ENCODE measurements at regions of chr10 and their contacts with region 1.

Region 1: DNA sequence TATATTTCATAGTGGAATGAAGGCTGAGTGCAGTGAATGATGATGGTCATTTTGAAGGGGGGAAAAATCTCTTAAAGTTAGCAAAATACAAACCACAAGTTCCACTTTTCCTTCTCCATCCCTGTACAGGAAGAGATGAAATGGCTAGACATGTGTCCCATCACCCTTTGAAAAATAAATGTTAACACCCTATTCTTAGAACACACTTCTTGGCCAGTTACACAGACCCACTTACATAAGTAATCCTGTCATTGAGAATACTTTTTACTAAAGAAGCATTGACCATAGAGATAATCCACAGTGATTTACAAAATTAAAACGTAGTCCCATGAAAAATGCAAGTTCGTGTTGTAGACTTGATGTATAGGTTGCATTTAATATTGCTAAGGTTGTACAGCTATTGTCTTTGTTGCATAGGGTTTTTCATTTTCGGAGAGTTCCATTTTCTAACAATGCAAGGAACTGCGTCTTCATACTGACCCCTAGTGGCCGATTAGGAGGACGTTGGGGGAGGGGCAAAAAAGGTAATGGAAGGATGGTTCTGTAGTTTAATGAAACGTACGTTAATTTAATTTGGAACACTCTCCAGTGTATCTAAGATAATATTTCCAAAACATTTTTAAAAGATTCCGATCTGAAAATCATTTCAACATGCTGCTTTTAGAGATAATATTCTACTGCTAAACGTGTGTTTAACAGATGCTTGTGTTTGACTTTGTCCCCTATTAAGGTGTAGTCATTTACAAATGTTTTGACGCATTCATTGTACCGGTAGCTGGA is 60.9 kb downstream of the ARMC3 start:
- DNase-seq: peak; percentile 47
- ATAC-seq: peak; percentile 79
- H3K4me3 ChIP-seq: no peak overlapping the region
- H3K27ac ChIP-seq: no peak overlapping the region
- H3K4me1 ChIP-seq: no peaks in the 10 kb centered on the region
- H3K27me3 ChIP-seq: peaks cover 22% of the 10 kb centered on the region
- CTCF ChIP-seq: peak; percentile 98
- POLR2A ChIP-seq: no peak
- RAD21 ChIP-seq: peak; percentile 98

Region 2: GRCh38 chr10:22003079-22003913 is 985.5 kb before region 1 on chr10 and contains the start of gene DNAJC1:
- CTCF ChIA-PET with region 1: interaction called, 10 read pairs
- POLR2A ChIA-PET with region 1: no interaction called
- dilution Hi-C with region 1: no loop called
- in situ Hi-C with region 1: loop called (anchors 5 kb)
- intact Hi-C with region 1: no loop called
- DNase-seq: peak; percentile 90
- ATAC-seq: peak; percentile 99
- H3K4me3 ChIP-seq: peak within 1 kb of the TSS; percentile 69
- H3K27ac ChIP-seq: peak within 1 kb of the TSS; percentile 29
- H3K4me1 ChIP-seq: no peaks in the 10 kb centered on the region; the same call in 1 of the 2 replicates
- H3K27me3 ChIP-seq: no peaks in the 10 kb centered on the region; the same call in none of the 2 replicates
- CTCF ChIP-seq: no peak; the same call in 1 of the 2 replicates
- POLR2A ChIP-seq: peak; percentile 62
- RAD21 ChIP-seq: no peak
- total RNA-seq, gene DNAJC1: 13.3 and 22.8 TPM in 2 replicates

Region 3: GRCh38 chr10:22228943-22229801 is 759.6 kb before region 1 on chr10:
- CTCF ChIA-PET with region 1: no interaction called
- POLR2A ChIA-PET with region 1: no interaction called
- dilution Hi-C with region 1: no loop called
- in situ Hi-C with region 1: no loop called
- intact Hi-C with region 1: loop called (anchors 5 kb)
- DNase-seq: peak; percentile 91
- ATAC-seq: peak; percentile 95
- H3K4me3 ChIP-seq: peak overlapping the region; percentile 74
- H3K27ac ChIP-seq: peak overlapping the region; percentile 53
- H3K4me1 ChIP-seq: no peaks in the 10 kb centered on the region
- H3K27me3 ChIP-seq: peaks cover 4% of the 10 kb centered on the region; the same call in 1 of the 2 replicates
- CTCF ChIP-seq: no peak
- POLR2A ChIP-seq: no peak
- RAD21 ChIP-seq: no peak

Region 4: GRCh38 chr10:22340362-22341189 is 648.2 kb before region 1 on chr10:
- CTCF ChIA-PET with region 1: no interaction called
- POLR2A ChIA-PET with region 1: no interaction called
- dilution Hi-C with region 1: no loop called
- in situ Hi-C with region 1: no loop called
- intact Hi-C with region 1: loop called (anchors 5 kb)
- DNase-seq: peak; percentile 82
- ATAC-seq: peak; percentile 81
- H3K4me3 ChIP-seq: peak overlapping the region; percentile 74
- H3K27ac ChIP-seq: peak overlapping the region; percentile 89
- H3K4me1 ChIP-seq: no peaks in the 10 kb centered on the region
- H3K27me3 ChIP-seq: peaks cover 67% of the 10 kb centered on the region
- CTCF ChIP-seq: no peak
- POLR2A ChIP-seq: peak; percentile 50
- RAD21 ChIP-seq: no peak

Region 5: GRCh38 chr10:22550732-22551131 is 438.0 kb before region 1 on chr10:
- CTCF ChIA-PET with region 1: interaction called, 7 read pairs
- POLR2A ChIA-PET with region 1: no interaction called
- dilution Hi-C with region 1: no loop called
- in situ Hi-C with region 1: no loop called
- intact Hi-C with region 1: loop called (anchors 1 kb)
- DNase-seq: peak; percentile 4
- ATAC-seq: no peak
- H3K4me3 ChIP-seq: no peak overlapping the region
- H3K27ac ChIP-seq: no peak overlapping the region
- H3K4me1 ChIP-seq: peaks cover 3% of the 10 kb centered on the region; the same call in 1 of the 2 replicates
- H3K27me3 ChIP-seq: no peaks in the 10 kb centered on the region
- CTCF ChIP-seq: peak; percentile 46
- POLR2A ChIP-seq: no peak
- RAD21 ChIP-seq: peak; percentile 24; the same call in 1 of the 2 replicates

Region 6: GRCh38 chr10:22714479-22715289 is 274.1 kb before region 1 on chr10 and contains the start of gene PIP4K2A:
- CTCF ChIA-PET with region 1: no interaction called
- POLR2A ChIA-PET with region 1: no interaction called
- dilution Hi-C with region 1: no loop called
- in situ Hi-C with region 1: no loop called
- intact Hi-C with region 1: loop called (anchors 2 kb)
- DNase-seq: peak; percentile 67
- ATAC-seq: peak; percentile 93
- H3K4me3 ChIP-seq: peak within 1 kb of the TSS; percentile 100
- H3K27ac ChIP-seq: peak within 1 kb of the TSS; percentile 93
- H3K4me1 ChIP-seq: no peaks in the 10 kb centered on the region; the same call in 1 of the 2 replicates
- H3K27me3 ChIP-seq: no peaks in the 10 kb centered on the region
- CTCF ChIP-seq: no peak
- POLR2A ChIP-seq: no peak
- RAD21 ChIP-seq: no peak
- total RNA-seq, gene PIP4K2A: 18.1 and 21.9 TPM in 2 replicates